ENCODE measurements at regions of chr5 and their contacts with region 1.

Region 1: GRCh38 chr5:77935506-77936364 is 159.6 kb upstream of the TBCA start:
- DNase-seq: peak; percentile 44
- ATAC-seq: peak; percentile 86
- H3K4me3 ChIP-seq: no peak overlapping the region
- H3K27ac ChIP-seq: peak overlapping the region; percentile 86
- H3K4me1 ChIP-seq: peaks cover 28% of the 10 kb centered on the region
- H3K27me3 ChIP-seq: no peaks in the 10 kb centered on the region
- CTCF ChIP-seq: no peak
- EP300 ChIP-seq: no peak
- POLR2A ChIP-seq: no peak
- RAD21 ChIP-seq: no peak

Region 2: DNA sequence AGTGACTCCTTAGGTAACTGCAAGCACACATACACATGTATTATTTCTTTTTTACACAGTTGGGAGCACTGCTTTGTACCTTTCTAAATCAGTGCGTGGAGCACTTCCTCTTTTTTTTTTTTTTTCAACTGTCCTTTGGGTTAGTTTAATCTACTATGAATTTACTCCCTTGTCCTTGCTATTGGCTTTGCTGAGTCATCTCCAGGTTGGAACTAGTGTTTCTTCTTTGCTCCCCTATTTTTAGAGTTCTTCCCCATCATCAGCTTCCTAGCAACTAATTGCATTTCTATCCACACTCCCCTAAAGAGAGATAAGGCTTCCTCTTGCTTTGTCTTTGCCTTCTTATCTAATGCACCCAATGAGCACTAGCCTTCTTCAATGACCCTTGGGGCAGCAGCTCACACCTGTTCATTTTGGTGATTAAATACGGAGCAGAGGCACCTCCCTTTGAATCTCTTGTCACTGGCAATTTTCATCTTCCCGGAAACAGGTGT is 1061.6 kb before region 1 on chr5:
- CTCF ChIA-PET with region 1: no interaction called
- POLR2A ChIA-PET with region 1: no interaction called
- RAD21 ChIA-PET with region 1: no interaction called
- SMC1A ChIA-PET with region 1: no interaction called
- in situ Hi-C with region 1: no loop called
- intact Hi-C with region 1: no loop called
- DNase-seq: peak; percentile 39
- ATAC-seq: peak; percentile 89
- H3K4me3 ChIP-seq: no peak overlapping the region; the same call in 1 of the 2 replicates
- H3K27ac ChIP-seq: peak overlapping the region; percentile 30; the same call in 1 of the 2 replicates
- H3K4me1 ChIP-seq: peaks cover 11% of the 10 kb centered on the region; the same call in 1 of the 2 replicates
- H3K27me3 ChIP-seq: no peaks in the 10 kb centered on the region
- CTCF ChIP-seq: no peak
- EP300 ChIP-seq: peak in 1 of 2 experiments; percentile 64; a peak in 1 of 4 replicates
- POLR2A ChIP-seq: no peak
- RAD21 ChIP-seq: no peak

Region 3: DNA sequence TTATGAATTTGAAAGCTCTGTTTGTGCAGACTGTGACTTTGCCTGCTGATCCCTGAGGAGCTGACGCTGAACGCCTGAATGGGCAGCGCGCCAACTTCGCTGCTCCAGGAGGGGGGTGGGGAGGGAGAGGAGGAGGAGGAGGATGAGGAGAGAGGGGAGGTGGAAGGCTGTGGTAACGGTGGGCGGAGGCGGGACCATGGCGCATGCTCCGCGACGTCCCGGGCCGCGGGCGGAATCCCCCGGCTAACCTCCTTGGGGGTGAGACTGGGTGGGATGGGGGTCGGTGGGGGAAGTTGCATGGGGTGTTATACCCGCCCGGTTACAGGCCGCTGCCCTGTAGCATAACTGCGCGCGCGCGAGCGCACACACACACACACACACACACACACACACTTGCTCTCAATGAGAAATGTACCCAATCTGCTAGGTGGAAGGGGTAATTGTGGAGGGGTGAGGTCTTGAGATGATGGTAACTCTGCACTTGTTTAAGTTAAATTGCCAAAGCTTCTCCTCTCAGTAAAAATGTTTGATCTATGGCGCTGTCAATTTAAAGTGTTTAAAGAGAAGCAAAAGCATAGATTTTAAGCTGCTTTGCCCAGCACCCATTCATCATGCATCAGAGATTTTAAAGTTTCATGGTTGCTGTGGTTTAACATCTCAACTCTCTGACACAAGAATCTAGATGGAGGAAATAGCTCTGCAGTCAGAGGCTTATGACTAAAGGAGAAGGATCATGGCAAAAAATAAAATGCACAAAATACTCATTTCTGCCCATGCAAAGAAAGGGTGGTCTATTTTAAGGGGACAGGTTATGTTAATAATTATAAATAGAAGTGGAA is 83.0 kb before region 1 on chr5:
- CTCF ChIA-PET with region 1: no interaction called
- POLR2A ChIA-PET with region 1: interaction called, 3 read pairs
- RAD21 ChIA-PET with region 1: interaction called, 11 read pairs
- SMC1A ChIA-PET with region 1: interaction called, 11 read pairs
- in situ Hi-C with region 1: no loop called
- intact Hi-C with region 1: loop called (anchors 5 kb)
- DNase-seq: peak; percentile 80
- ATAC-seq: peak; percentile 94
- H3K4me3 ChIP-seq: peak overlapping the region; percentile 76
- H3K27ac ChIP-seq: peak overlapping the region; percentile 78
- H3K4me1 ChIP-seq: peaks cover 3% of the 10 kb centered on the region; the same call in 1 of the 2 replicates
- H3K27me3 ChIP-seq: no peaks in the 10 kb centered on the region
- CTCF ChIP-seq: no peak
- EP300 ChIP-seq: 0 out of 4 replicates have a peak, but pooled peaks have one; percentile 18 to 30
- POLR2A ChIP-seq: peak; percentile 59
- RAD21 ChIP-seq: no peak; the same call in 1 of the 2 replicates

Region 4: GRCh38 chr5:77882670-77883257 is 53.0 kb before region 1 on chr5:
- CTCF ChIA-PET with region 1: interaction called, 5 read pairs
- POLR2A ChIA-PET with region 1: interaction called, 12 read pairs
- RAD21 ChIA-PET with region 1: interaction called, 68 read pairs
- SMC1A ChIA-PET with region 1: interaction called, 81 read pairs
- in situ Hi-C with region 1: no loop called
- intact Hi-C with region 1: loop called (anchors 2 kb)
- DNase-seq: no peak
- ATAC-seq: no peak
- H3K4me3 ChIP-seq: no peak overlapping the region
- H3K27ac ChIP-seq: no peak overlapping the region
- H3K4me1 ChIP-seq: peaks cover 12% of the 10 kb centered on the region
- H3K27me3 ChIP-seq: no peaks in the 10 kb centered on the region
- CTCF ChIP-seq: no peak
- EP300 ChIP-seq: no peak
- POLR2A ChIP-seq: no peak
- RAD21 ChIP-seq: no peak

Region 5: DNA sequence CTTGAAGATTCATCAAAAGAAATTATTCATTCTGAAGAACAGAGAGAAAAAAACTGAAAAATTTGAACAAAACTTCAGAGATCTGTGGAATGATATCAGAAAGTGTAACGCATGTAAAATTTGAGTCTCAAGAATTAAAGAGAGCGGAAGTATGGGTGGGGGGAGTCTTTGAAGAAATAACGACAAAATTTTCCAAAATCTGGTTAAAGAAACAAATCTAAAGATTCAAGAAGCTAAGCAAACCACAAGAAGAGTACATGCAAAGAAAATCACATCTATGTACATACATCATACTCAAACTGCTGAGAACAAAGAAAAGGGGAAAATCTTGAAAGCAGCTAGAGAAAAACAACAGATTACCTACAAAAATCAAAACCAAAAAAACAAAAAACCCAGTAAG is 10.2 kb before region 1 on chr5:
- CTCF ChIA-PET with region 1: interaction called, 4 read pairs
- POLR2A ChIA-PET with region 1: interaction called, 3 read pairs
- RAD21 ChIA-PET with region 1: interaction called, 3 read pairs
- SMC1A ChIA-PET with region 1: interaction called, 11 read pairs
- in situ Hi-C with region 1: no loop called
- intact Hi-C with region 1: no loop called
- DNase-seq: no peak
- ATAC-seq: no peak
- H3K4me3 ChIP-seq: no peak overlapping the region
- H3K27ac ChIP-seq: no peak overlapping the region
- H3K4me1 ChIP-seq: peaks cover 6% of the 10 kb centered on the region
- H3K27me3 ChIP-seq: no peaks in the 10 kb centered on the region
- CTCF ChIP-seq: no peak
- EP300 ChIP-seq: no peak
- POLR2A ChIP-seq: no peak
- RAD21 ChIP-seq: no peak

Region 6: DNA sequence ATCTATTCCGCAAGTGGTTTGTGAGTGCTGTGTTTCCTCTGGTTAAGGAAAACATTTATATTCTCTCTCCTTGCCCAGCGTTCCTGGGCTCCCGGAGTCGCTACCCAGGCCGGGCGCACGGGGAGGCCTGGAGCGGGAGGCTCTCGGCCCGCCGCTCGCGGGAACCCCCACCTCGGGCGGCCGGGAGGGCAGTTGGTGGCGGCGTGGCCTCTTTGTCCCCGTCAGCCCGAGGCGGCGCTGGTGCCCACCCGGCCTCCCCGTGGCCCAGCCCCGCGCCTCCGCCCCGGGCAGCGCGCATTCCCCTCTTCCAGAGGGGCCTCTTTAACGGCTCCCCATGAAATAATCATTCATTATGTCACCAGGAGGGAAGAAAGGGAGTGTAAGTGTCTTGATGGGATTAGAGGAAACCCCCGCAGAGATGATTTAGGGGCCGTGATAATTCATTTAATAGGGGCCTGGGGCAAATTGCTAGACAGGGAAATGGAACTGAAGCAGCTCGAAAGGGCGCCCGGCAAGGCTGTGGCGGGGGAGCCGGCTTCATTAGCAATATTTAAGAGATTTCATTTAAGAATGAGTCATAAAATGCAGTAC is 22.3 kb after region 1 on chr5:
- CTCF ChIA-PET with region 1: interaction called, 5 read pairs
- POLR2A ChIA-PET with region 1: interaction called, 6 read pairs
- RAD21 ChIA-PET with region 1: interaction called, 13 read pairs
- SMC1A ChIA-PET with region 1: interaction called, 18 read pairs
- in situ Hi-C with region 1: no loop called
- intact Hi-C with region 1: no loop called
- DNase-seq: no peak
- ATAC-seq: no peak
- H3K4me3 ChIP-seq: no peak overlapping the region
- H3K27ac ChIP-seq: no peak overlapping the region
- H3K4me1 ChIP-seq: peaks cover 6% of the 10 kb centered on the region
- H3K27me3 ChIP-seq: no peaks in the 10 kb centered on the region
- CTCF ChIP-seq: no peak
- EP300 ChIP-seq: no peak
- POLR2A ChIP-seq: no peak
- RAD21 ChIP-seq: no peak

Measured in GM12878 (cell line).